IMR-90 (cell line): ENCODE measurements at regions of chr10 and their contacts with region 1.

Region 1: DNA sequence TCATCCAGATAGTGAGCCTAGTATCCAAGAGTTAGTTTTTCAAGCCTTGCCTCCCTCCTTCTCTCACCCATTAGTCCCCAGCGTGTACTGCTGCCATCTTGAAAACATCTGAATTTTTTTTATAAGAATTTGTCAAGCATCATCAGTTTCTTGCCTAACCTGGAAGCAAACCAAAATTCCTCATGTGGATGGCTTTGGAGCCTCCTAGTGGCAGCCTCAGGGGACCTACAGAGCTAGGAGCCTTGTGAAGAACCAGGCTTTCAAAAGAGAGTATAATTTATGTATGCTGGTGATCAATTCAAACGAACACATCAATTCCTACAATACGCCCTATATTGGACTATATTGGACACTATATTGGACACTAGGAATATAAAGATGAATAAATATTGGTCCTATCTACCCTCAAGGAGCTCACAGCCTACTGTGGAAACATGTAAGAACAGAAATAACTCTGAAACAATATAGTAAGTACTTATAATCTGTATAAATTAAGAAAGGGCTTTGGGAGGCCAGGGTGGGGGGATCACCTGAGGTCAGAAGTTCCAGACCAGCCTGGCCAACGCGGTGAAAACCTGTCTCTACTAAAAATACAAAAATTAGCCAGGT is 63.4 kb downstream of the HPSE2 start:
- DNase-seq: peak; percentile 51
- ATAC-seq: peak; percentile 65
- H3K4me3 ChIP-seq: no peak overlapping the region
- H3K27ac ChIP-seq: no peak overlapping the region
- H3K4me1 ChIP-seq: no peaks in the 10 kb centered on the region
- H3K27me3 ChIP-seq: no peaks in the 10 kb centered on the region
- CTCF ChIP-seq: peak; percentile 46
- POLR2A ChIP-seq: no peak
- RAD21 ChIP-seq: peak; percentile 43

Region 2: DNA sequence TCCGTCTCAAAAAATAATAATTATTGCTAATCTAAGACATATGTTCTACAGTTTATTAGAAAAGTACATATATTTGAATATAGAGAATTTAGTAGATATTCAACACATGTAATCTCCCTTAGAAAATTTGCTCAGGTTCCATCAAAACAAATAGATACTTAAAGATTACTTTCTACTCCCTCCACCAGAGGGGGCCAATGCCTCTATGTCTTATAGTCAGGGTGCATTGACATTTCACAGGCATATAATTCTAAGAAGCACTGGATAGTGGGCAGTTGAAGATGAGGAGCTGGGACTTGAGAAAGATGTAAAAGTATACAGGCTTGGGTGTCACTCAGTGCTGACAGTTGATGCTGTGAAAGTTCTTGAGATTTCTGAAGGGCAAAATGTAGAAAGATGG is 423.9 kb before region 1 on chr10:
- CTCF ChIA-PET with region 1: no interaction called
- POLR2A ChIA-PET with region 1: no interaction called
- dilution Hi-C with region 1: no loop called
- in situ Hi-C with region 1: no loop called
- intact Hi-C with region 1: loop called (anchors 1 kb)
- DNase-seq: peak; percentile 38
- ATAC-seq: no peak
- H3K4me3 ChIP-seq: no peak overlapping the region
- H3K27ac ChIP-seq: no peak overlapping the region
- H3K4me1 ChIP-seq: no peaks in the 10 kb centered on the region
- H3K27me3 ChIP-seq: no peaks in the 10 kb centered on the region
- CTCF ChIP-seq: peak; percentile 42
- POLR2A ChIP-seq: no peak
- RAD21 ChIP-seq: peak; percentile 20; the same call in 1 of the 2 replicates

Region 3: DNA sequence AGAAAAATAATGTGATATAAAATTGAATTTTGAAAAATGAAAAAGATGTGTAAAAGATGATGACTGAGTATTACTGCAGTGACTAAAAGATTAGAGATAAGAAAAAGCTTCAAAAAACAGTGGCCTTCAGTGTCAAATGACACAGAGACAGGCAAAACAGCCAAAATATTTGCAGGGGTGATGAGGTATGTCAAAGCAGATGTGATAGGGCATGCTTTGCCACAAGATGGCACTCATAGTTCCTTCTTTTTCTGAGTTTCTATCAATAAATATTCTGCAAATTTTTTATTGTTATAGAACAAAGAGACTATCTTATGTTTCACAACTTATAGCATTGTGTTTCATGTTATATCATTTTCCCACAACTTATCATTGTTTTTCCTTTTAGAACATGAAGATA is 381.4 kb before region 1 on chr10:
- CTCF ChIA-PET with region 1: no interaction called
- POLR2A ChIA-PET with region 1: no interaction called
- dilution Hi-C with region 1: no loop called
- in situ Hi-C with region 1: no loop called
- intact Hi-C with region 1: loop called (anchors 5 kb)
- DNase-seq: peak; percentile 12
- ATAC-seq: peak; percentile 53
- H3K4me3 ChIP-seq: no peak overlapping the region
- H3K27ac ChIP-seq: no peak overlapping the region
- H3K4me1 ChIP-seq: no peaks in the 10 kb centered on the region
- H3K27me3 ChIP-seq: no peaks in the 10 kb centered on the region
- CTCF ChIP-seq: peak; percentile 29
- POLR2A ChIP-seq: no peak
- RAD21 ChIP-seq: peak; percentile 29; the same call in 1 of the 2 replicates

Region 4: GRCh38 chr10:99484603-99485581 is 312.7 kb after region 1 on chr10:
- CTCF ChIA-PET with region 1: no interaction called
- POLR2A ChIA-PET with region 1: no interaction called
- dilution Hi-C with region 1: no loop called
- in situ Hi-C with region 1: no loop called
- intact Hi-C with region 1: no loop called
- DNase-seq: no peak
- ATAC-seq: no peak
- H3K4me3 ChIP-seq: no peak overlapping the region
- H3K27ac ChIP-seq: no peak overlapping the region
- H3K4me1 ChIP-seq: no peaks in the 10 kb centered on the region
- H3K27me3 ChIP-seq: peaks cover 16% of the 10 kb centered on the region
- CTCF ChIP-seq: no peak
- POLR2A ChIP-seq: no peak
- RAD21 ChIP-seq: no peak